Caco-2 (cell line): ENCODE measurements at regions of chr2 and their contacts with region 1.

Region 1: GRCh38 chr2:197499594-197500526 is at the starts of genes HSPD1 and HSPE1:
- DNase-seq: peak; percentile 99
- H3K4me3 ChIP-seq: peak within 1 kb of the TSS; percentile 91
- H3K4me3 Mint-ChIP-seq: peak within 1 kb of the TSS; percentile 95
- H3K27ac Mint-ChIP-seq: peak within 1 kb of the TSS; percentile 97
- H3K4me1 ChIP-seq: peaks cover 42% of the 10 kb centered on the region
- H3K4me1 Mint-ChIP-seq: peaks cover 7% of the 10 kb centered on the region
- H3K27me3 ChIP-seq: no peaks in the 10 kb centered on the region
- H3K27me3 Mint-ChIP-seq: no peaks in the 10 kb centered on the region
- CTCF ChIP-seq: no peak
- total RNA-seq, gene HSPD1: 877 and 933 TPM in 2 replicates
- total RNA-seq, gene HSPE1: 340 and 373 TPM in 2 replicates

Region 2: GRCh38 chr2:197072533-197072932 is 427.3 kb before region 1 on chr2:
- CTCF ChIA-PET with region 1: no interaction called
- POLR2A ChIA-PET with region 1: no interaction called
- intact Hi-C with region 1: no loop called
- DNase-seq: no peak
- H3K4me3 ChIP-seq: no peak overlapping the region
- H3K4me3 Mint-ChIP-seq: no peak overlapping the region
- H3K27ac Mint-ChIP-seq: no peak overlapping the region
- H3K4me1 ChIP-seq: no peaks in the 10 kb centered on the region
- H3K4me1 Mint-ChIP-seq: no peaks in the 10 kb centered on the region
- H3K27me3 ChIP-seq: no peaks in the 10 kb centered on the region
- H3K27me3 Mint-ChIP-seq: no peaks in the 10 kb centered on the region
- CTCF ChIP-seq: no peak

Region 3: GRCh38 chr2:197434541-197435513 is 65.0 kb before region 1 on chr2 and contains the start of gene SF3B1:
- CTCF ChIA-PET with region 1: no interaction called
- POLR2A ChIA-PET with region 1: interaction called, 13 read pairs
- intact Hi-C with region 1: loop called (anchors 1 kb)
- DNase-seq: peak; percentile 98
- H3K4me3 ChIP-seq: peak within 1 kb of the TSS; percentile 89
- H3K4me3 Mint-ChIP-seq: peak within 1 kb of the TSS; percentile 92
- H3K27ac Mint-ChIP-seq: peak within 1 kb of the TSS; percentile 100
- H3K4me1 ChIP-seq: peaks cover 6% of the 10 kb centered on the region; the same call in 1 of the 2 replicates
- H3K4me1 Mint-ChIP-seq: peaks cover 12% of the 10 kb centered on the region
- H3K27me3 ChIP-seq: no peaks in the 10 kb centered on the region
- H3K27me3 Mint-ChIP-seq: no peaks in the 10 kb centered on the region
- CTCF ChIP-seq: no peak
- total RNA-seq, gene SF3B1: 273 and 274 TPM in 2 replicates

Region 4: DNA sequence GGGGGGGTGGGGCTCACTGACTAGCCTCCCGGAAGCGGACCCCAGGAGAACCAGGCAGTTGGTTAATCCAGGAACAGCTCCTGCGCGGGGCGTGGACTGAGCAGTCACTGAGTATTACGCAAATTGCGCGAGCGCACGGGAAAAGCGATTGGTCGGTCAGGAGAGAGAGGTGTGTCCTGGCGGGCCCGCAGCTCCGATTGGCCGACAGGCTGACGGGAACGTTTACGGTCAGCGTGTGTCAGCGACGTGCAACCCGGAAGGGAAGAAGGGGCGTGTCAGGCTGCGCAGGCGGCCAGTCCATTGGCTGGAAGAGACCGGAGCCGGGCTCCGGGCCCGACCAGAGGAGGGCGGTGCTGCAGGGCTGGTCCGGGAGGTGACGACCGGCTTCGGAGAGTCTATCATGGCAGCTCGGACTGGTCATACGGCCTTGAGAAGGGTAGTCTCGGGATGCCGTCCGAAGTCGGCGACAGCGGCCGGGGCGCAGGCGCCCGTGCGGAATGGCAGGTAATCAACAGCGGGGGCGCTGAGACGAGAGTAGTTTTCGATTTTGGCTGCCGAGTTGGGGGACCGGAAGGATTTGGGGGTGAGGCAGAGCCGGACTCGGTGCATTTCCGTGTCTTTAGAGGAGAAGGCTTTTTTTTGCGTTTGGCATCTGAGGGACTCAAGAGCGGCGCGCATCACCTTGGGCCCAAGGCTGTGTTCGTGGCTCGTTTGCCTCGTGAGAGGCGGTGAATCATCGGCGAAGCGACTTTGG is 46.5 kb before region 1 on chr2 and contains the start of gene COQ10B:
- CTCF ChIA-PET with region 1: interaction called, 4 read pairs
- POLR2A ChIA-PET with region 1: interaction called, 64 read pairs
- intact Hi-C with region 1: loop called (anchors 1 kb)
- DNase-seq: peak; percentile 99 to 100
- H3K4me3 ChIP-seq: peak within 1 kb of the TSS; percentile 71
- H3K4me3 Mint-ChIP-seq: peak within 1 kb of the TSS; percentile 92
- H3K27ac Mint-ChIP-seq: peak within 1 kb of the TSS; percentile 98
- H3K4me1 ChIP-seq: peaks cover 16% of the 10 kb centered on the region
- H3K4me1 Mint-ChIP-seq: peaks cover 17% of the 10 kb centered on the region
- H3K27me3 ChIP-seq: no peaks in the 10 kb centered on the region
- H3K27me3 Mint-ChIP-seq: no peaks in the 10 kb centered on the region
- CTCF ChIP-seq: peak in 1 of 2 experiments; percentile 46
- total RNA-seq, gene COQ10B: 22.5 and 25.0 TPM in 2 replicates

Region 5: GRCh38 chr2:197461057-197461456 is 38.8 kb before region 1 on chr2:
- CTCF ChIA-PET with region 1: no interaction called
- POLR2A ChIA-PET with region 1: interaction called, 11 read pairs
- intact Hi-C with region 1: loop called (anchors 1 kb)
- DNase-seq: no peak
- H3K4me3 ChIP-seq: no peak overlapping the region
- H3K4me3 Mint-ChIP-seq: peak overlapping the region; percentile 34
- H3K27ac Mint-ChIP-seq: peak overlapping the region; percentile 92
- H3K4me1 ChIP-seq: peaks cover 18% of the 10 kb centered on the region
- H3K4me1 Mint-ChIP-seq: peaks cover 30% of the 10 kb centered on the region
- H3K27me3 ChIP-seq: no peaks in the 10 kb centered on the region
- H3K27me3 Mint-ChIP-seq: no peaks in the 10 kb centered on the region
- CTCF ChIP-seq: no peak

Region 6: GRCh38 chr2:197515739-197516392 is 16.0 kb after region 1 on chr2 and contains the start of gene MOB4:
- CTCF ChIA-PET with region 1: interaction called, 5 read pairs
- POLR2A ChIA-PET with region 1: interaction called, 36 read pairs
- intact Hi-C with region 1: loop called (anchors 1 kb)
- DNase-seq: peak; percentile 96 to 98
- H3K4me3 ChIP-seq: peak within 1 kb of the TSS; percentile 99
- H3K4me3 Mint-ChIP-seq: peak within 1 kb of the TSS; percentile 95
- H3K27ac Mint-ChIP-seq: peak within 1 kb of the TSS; percentile 91
- H3K4me1 ChIP-seq: peaks cover 15% of the 10 kb centered on the region
- H3K4me1 Mint-ChIP-seq: peaks cover 9% of the 10 kb centered on the region
- H3K27me3 ChIP-seq: no peaks in the 10 kb centered on the region
- H3K27me3 Mint-ChIP-seq: no peaks in the 10 kb centered on the region
- CTCF ChIP-seq: no peak
- total RNA-seq, gene MOB4: 27.2 and 31.1 TPM in 2 replicates

Region 7: GRCh38 chr2:197705121-197705911 is 205.5 kb after region 1 on chr2 and contains the start of gene MARS2:
- CTCF ChIA-PET with region 1: no interaction called
- POLR2A ChIA-PET with region 1: interaction called, 5 read pairs
- intact Hi-C with region 1: loop called (anchors 5 kb)
- DNase-seq: peak; percentile 92 to 94
- H3K4me3 ChIP-seq: peak within 1 kb of the TSS; percentile 86
- H3K4me3 Mint-ChIP-seq: peak within 1 kb of the TSS; percentile 90
- H3K27ac Mint-ChIP-seq: peak within 1 kb of the TSS; percentile 94
- H3K4me1 ChIP-seq: peaks cover 5% of the 10 kb centered on the region
- H3K4me1 Mint-ChIP-seq: peaks cover 12% of the 10 kb centered on the region
- H3K27me3 ChIP-seq: no peaks in the 10 kb centered on the region
- H3K27me3 Mint-ChIP-seq: peaks cover 3% of the 10 kb centered on the region
- CTCF ChIP-seq: no peak
- total RNA-seq, gene MARS2: 12.1 and 13.1 TPM in 2 replicates

Region 8: DNA sequence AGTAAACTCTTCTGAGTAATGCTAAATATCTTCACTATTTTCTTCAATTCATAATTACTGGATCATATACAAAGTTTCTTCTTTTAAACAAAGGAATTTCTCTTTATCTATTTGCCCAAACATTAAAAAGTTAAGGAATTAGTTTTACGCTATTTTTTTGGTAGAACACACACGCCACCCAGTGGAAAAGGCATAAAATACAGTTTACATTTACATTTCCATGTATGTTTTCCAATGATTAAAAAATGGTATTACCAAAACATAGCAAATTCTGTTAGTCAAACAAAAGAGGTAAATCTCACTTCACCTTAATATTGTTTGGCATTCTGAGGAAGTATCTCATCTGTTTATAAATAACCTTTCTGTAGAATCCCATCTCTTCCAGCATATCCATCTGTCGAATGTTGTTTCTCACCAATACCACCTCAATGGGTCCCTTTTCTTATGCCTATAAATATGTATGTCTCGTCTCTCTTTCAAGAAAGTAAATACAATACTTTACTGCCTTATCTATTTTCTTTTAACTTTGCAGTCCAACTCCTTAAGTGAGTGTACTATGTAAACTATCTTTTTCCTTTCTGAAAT is 278.1 kb after region 1 on chr2:
- CTCF ChIA-PET with region 1: no interaction called
- POLR2A ChIA-PET with region 1: no interaction called
- intact Hi-C with region 1: loop called (anchors 5 kb)
- DNase-seq: peak in 1 of 2 experiments; percentile 35
- H3K4me3 ChIP-seq: no peak overlapping the region
- H3K4me3 Mint-ChIP-seq: no peak overlapping the region
- H3K27ac Mint-ChIP-seq: no peak overlapping the region
- H3K4me1 ChIP-seq: no peaks in the 10 kb centered on the region
- H3K4me1 Mint-ChIP-seq: peaks cover 8% of the 10 kb centered on the region
- H3K27me3 ChIP-seq: no peaks in the 10 kb centered on the region
- H3K27me3 Mint-ChIP-seq: no peaks in the 10 kb centered on the region
- CTCF ChIP-seq: peak; percentile 61 to 81